WTC11 (cell line): ENCODE measurements at regions of chr4 and their contacts with region 1.

Region 1: GRCh38 chr4:53476232-53477037 is 99.0 kb downstream of the FIP1L1 start:
- DNase-seq: no peak
- ATAC-seq: peak; percentile 54
- H3K4me3 Mint-ChIP-seq: peak overlapping the region; percentile 18
- H3K27ac Mint-ChIP-seq: peak overlapping the region; percentile 96
- H3K4me1 Mint-ChIP-seq: peaks cover 57% of the 10 kb centered on the region
- H3K27me3 Mint-ChIP-seq: no peaks in the 10 kb centered on the region
- CTCF ChIP-seq: no peak

Region 2: GRCh38 chr4:53267026-53267425 is 209.4 kb before region 1 on chr4:
- CTCF ChIA-PET with region 1: no interaction called
- POLR2A ChIA-PET with region 1: no interaction called
- DNase-seq: no peak
- ATAC-seq: no peak
- H3K4me3 Mint-ChIP-seq: no peak overlapping the region
- H3K27ac Mint-ChIP-seq: no peak overlapping the region
- H3K4me1 Mint-ChIP-seq: no peaks in the 10 kb centered on the region
- H3K27me3 Mint-ChIP-seq: no peaks in the 10 kb centered on the region; the same call in 1 of the 2 replicates
- CTCF ChIP-seq: no peak

Region 3: GRCh38 chr4:53490965-53491622 is 14.7 kb after region 1 on chr4:
- CTCF ChIA-PET with region 1: interaction called, 14 read pairs
- POLR2A ChIA-PET with region 1: interaction called, 4 read pairs
- DNase-seq: peak; percentile 21
- ATAC-seq: peak; percentile 71
- H3K4me3 Mint-ChIP-seq: no peak overlapping the region
- H3K27ac Mint-ChIP-seq: no peak overlapping the region
- H3K4me1 Mint-ChIP-seq: peaks cover 14% of the 10 kb centered on the region
- H3K27me3 Mint-ChIP-seq: no peaks in the 10 kb centered on the region
- CTCF ChIP-seq: no peak